CD8-positive, alpha-beta T cell (primary cell): ENCODE measurements at regions of chr4 and their contacts with region 1.

Region 1: DNA sequence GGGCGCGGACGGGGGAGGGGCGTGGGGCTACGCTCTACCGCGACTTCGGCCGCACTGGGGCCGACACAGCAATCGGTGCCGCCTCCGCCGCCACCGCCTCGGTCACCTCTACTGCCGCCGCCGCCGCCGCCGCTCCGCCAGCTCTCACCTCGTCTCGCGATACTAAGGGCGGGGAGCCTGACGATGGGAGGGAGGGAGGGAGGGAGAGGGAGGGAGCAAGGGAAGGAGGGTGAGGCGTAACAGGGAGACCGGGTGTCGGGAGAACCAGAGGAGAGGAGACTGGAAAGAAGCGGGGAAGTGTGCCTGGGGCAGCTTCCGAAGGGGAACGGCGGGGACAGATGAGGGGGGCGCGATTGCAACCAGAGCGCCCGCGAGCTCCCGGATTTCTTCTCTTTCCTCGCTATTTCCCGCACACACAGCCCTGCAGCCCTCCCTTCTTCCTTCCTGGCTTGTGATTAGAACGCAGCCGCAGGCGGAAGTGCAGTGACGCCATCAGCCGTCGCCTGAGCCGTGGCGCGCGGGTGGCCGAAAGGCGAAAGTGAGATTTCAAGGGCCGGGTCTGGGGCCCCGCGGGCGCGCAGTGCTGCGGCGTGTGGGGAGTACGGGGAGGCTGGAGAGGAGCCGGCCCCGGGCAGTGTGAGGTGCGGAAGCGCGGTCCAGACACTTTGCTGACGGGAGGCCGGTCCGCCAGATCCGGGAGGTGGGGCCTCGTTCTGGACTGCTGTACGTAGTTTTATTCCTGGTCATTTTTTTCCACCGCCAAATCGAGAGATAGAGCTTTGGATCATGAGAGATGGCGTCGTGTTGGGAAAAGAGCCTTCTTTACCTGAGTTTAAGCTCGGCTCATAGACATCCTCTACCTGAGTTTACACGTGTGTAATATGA is at the start of gene ANKRD17:
- DNase-seq: peak; percentile 75 to 95 (median 89)
- ATAC-seq: peak; percentile 72
- H3K4me3 ChIP-seq: peak within 1 kb of the TSS; percentile 67 to 69
- H3K4me3 Mint-ChIP-seq: peak within 1 kb of the TSS; percentile 100
- H3K27ac ChIP-seq: peak within 1 kb of the TSS; percentile 94 to 95
- H3K27ac Mint-ChIP-seq: peak within 1 kb of the TSS; percentile 100
- H3K4me1 ChIP-seq: peaks cover 40% of the 10 kb centered on the region
- H3K4me1 Mint-ChIP-seq: peaks cover 72% of the 10 kb centered on the region
- H3K27me3 ChIP-seq: no peaks in the 10 kb centered on the region
- H3K27me3 Mint-ChIP-seq: no peaks in the 10 kb centered on the region
- CTCF ChIP-seq: no peak
- total RNA-seq, gene ANKRD17: 29.6 to 29.7 TPM

Region 2: DNA sequence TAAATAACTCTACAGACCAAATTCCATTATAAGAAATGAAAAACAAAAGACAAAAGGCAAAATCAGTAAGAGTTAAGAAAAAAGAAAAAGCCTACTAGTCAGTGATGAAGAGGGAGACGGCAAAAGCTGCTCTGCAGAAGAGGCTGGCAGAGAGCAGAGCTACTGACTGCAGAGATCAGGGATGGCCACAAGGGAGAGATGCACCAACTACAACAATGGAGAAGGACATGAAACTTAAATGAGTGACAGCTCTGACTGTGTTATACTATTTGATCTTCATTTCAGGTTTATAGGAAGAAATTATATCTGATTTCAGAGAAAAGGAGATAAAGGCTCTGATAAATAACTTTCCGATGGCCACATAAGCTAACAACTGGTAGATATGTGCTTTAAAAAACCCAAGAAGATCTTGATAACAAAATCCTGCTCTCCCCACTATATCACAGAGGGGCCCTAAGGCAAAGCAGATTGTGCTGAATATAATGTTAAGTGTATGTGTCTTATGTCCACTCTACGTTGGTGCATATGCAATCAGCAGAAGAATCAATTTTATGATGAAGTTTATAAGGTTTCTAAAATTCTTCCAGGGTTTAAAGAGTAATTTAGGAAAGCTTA is 131.0 kb before region 1 on chr4:
- CTCF ChIA-PET with region 1: interaction called, 11 read pairs
- POLR2A ChIA-PET with region 1: interaction called, 5 read pairs
- intact Hi-C with region 1: loop called (anchors 1 to 2 kb)
- DNase-seq: peak in 4 of 9 experiments; percentile 6 to 46 (median 32)
- ATAC-seq: peak; percentile 93
- H3K4me3 ChIP-seq: no peak overlapping the region
- H3K4me3 Mint-ChIP-seq: no peak overlapping the region
- H3K27ac ChIP-seq: no peak overlapping the region
- H3K27ac Mint-ChIP-seq: no peak overlapping the region
- H3K4me1 ChIP-seq: no peaks in the 10 kb centered on the region
- H3K4me1 Mint-ChIP-seq: peaks cover 2% of the 10 kb centered on the region
- H3K27me3 ChIP-seq: no peaks in the 10 kb centered on the region
- H3K27me3 Mint-ChIP-seq: no peaks in the 10 kb centered on the region
- CTCF ChIP-seq: no peak

Region 3: DNA sequence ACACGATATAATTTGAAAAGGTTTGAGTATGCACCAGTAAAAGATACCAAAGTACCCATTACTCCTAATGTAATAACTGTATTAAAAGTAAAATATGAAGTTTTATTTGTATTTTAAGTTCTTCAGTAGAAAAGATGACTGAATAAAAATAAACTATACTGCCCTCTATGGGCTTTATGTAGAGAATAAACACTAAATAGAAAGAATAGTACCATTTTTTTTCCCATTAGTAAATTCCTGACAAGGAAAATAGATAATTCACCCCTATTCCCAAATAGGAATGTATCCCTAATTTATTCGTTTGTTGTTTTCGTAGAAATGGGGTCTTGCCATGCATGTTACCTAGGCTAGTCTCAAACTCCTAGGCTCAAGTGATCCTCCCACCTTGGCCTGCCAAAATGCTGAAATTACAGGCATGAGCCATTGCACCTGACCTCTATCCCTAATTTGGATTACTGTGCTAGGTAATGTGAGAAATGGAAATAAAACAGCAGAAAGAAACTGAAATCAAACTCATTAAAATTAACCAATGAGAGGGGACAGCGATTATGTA is 115.9 kb before region 1 on chr4:
- CTCF ChIA-PET with region 1: interaction called, 8 read pairs
- POLR2A ChIA-PET with region 1: no interaction called
- intact Hi-C with region 1: loop called (anchors 5 kb)
- DNase-seq: no peak
- ATAC-seq: no peak
- H3K4me3 ChIP-seq: no peak overlapping the region
- H3K4me3 Mint-ChIP-seq: no peak overlapping the region
- H3K27ac ChIP-seq: no peak overlapping the region
- H3K27ac Mint-ChIP-seq: no peak overlapping the region
- H3K4me1 ChIP-seq: no peaks in the 10 kb centered on the region
- H3K4me1 Mint-ChIP-seq: peaks cover 5% of the 10 kb centered on the region
- H3K27me3 ChIP-seq: no peaks in the 10 kb centered on the region
- H3K27me3 Mint-ChIP-seq: no peaks in the 10 kb centered on the region
- CTCF ChIP-seq: peak; percentile 38

Region 4: DNA sequence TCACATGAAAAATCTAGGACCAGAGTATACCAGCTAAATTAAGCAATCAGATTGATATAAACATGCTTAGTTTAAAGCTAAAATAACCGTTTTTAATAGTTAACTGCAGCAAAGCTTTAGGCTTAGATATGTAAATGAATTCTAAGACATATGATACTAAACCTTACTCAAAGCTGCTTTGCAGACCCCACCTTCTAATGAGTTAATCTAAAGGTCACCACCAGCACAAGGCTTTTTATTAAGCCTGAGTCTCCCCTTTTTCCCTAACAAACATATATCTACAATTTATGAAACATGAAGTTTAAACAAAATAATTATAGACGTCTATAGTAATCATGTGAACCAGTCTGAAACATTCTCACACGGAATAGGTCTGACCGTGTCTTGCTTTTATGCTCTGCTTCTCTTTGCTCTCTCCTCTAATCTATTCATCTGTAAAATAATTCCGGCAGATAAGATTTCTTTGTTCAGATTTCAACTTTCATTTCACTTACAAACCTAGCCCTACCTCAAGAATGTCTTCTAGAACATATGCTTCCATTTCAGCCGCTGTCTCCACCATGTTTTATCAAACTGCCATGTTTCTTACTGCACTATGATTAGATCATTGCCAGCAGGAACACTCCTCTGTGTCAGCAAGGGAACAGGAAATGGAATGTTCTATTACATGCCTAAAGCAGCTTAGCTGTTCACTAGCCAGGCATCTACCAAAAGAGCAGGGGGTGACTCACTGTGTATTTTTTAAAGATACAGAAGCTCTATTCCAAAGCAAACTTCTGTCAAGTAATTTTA is 36.3 kb before region 1 on chr4:
- CTCF ChIA-PET with region 1: interaction called, 7 read pairs
- POLR2A ChIA-PET with region 1: interaction called, 12 read pairs
- intact Hi-C with region 1: loop called (anchors 1 to 2 kb)
- DNase-seq: peak; percentile 12 to 89 (median 52)
- ATAC-seq: peak; percentile 100
- H3K4me3 ChIP-seq: peak overlapping the region; percentile 50 to 59
- H3K4me3 Mint-ChIP-seq: no peak overlapping the region
- H3K27ac ChIP-seq: peak overlapping the region; percentile 71 to 86
- H3K27ac Mint-ChIP-seq: no peak overlapping the region
- H3K4me1 ChIP-seq: peaks cover 20% of the 10 kb centered on the region
- H3K4me1 Mint-ChIP-seq: peaks cover 41% of the 10 kb centered on the region
- H3K27me3 ChIP-seq: no peaks in the 10 kb centered on the region
- H3K27me3 Mint-ChIP-seq: no peaks in the 10 kb centered on the region
- CTCF ChIP-seq: no peak

Region 5: GRCh38 chr4:73245955-73246354 is 13.0 kb before region 1 on chr4:
- CTCF ChIA-PET with region 1: interaction called, 7 read pairs
- POLR2A ChIA-PET with region 1: no interaction called
- intact Hi-C with region 1: loop called in 1 of 2 experiments (anchors 2 kb)
- DNase-seq: no peak
- ATAC-seq: no peak
- H3K4me3 ChIP-seq: no peak overlapping the region
- H3K4me3 Mint-ChIP-seq: no peak overlapping the region
- H3K27ac ChIP-seq: no peak overlapping the region
- H3K27ac Mint-ChIP-seq: peak overlapping the region; percentile 15
- H3K4me1 ChIP-seq: peaks cover 48% of the 10 kb centered on the region
- H3K4me1 Mint-ChIP-seq: peaks cover 72% of the 10 kb centered on the region
- H3K27me3 ChIP-seq: no peaks in the 10 kb centered on the region
- H3K27me3 Mint-ChIP-seq: no peaks in the 10 kb centered on the region
- CTCF ChIP-seq: no peak